ENCODE measurements at regions of chr2 and their contacts with region 1.

Region 1: GRCh38 chr2:42086500-42086953 is 38.7 kb downstream of the PKDCC start:
- DNase-seq: peak; percentile 61 to 78
- H3K4me3 ChIP-seq: no peak overlapping the region
- H3K4me3 Mint-ChIP-seq: no peak overlapping the region
- H3K27ac Mint-ChIP-seq: no peak overlapping the region
- H3K4me1 ChIP-seq: peaks cover 57% of the 10 kb centered on the region
- H3K4me1 Mint-ChIP-seq: peaks cover 66% of the 10 kb centered on the region
- H3K27me3 ChIP-seq: no peaks in the 10 kb centered on the region
- H3K27me3 Mint-ChIP-seq: no peaks in the 10 kb centered on the region
- CTCF ChIP-seq: peak; percentile 74 to 88

Region 2: GRCh38 chr2:41840702-41841551 is 245.6 kb before region 1 on chr2:
- CTCF ChIA-PET with region 1: interaction called, 4 read pairs
- POLR2A ChIA-PET with region 1: no interaction called
- intact Hi-C with region 1: loop called (anchors 1 kb)
- DNase-seq: peak; percentile 98 to 99
- H3K4me3 ChIP-seq: peak overlapping the region; percentile 56
- H3K4me3 Mint-ChIP-seq: peak overlapping the region; percentile 91
- H3K27ac Mint-ChIP-seq: peak overlapping the region; percentile 77
- H3K4me1 ChIP-seq: no peaks in the 10 kb centered on the region
- H3K4me1 Mint-ChIP-seq: no peaks in the 10 kb centered on the region
- H3K27me3 ChIP-seq: no peaks in the 10 kb centered on the region
- H3K27me3 Mint-ChIP-seq: peaks cover 3% of the 10 kb centered on the region
- CTCF ChIP-seq: peak; percentile 98 to 100

Region 3: GRCh38 chr2:41894563-41895333 is 191.8 kb before region 1 on chr2:
- CTCF ChIA-PET with region 1: no interaction called
- POLR2A ChIA-PET with region 1: no interaction called
- intact Hi-C with region 1: loop called (anchors 1 kb)
- DNase-seq: peak; percentile 86 to 88
- H3K4me3 ChIP-seq: no peak overlapping the region
- H3K4me3 Mint-ChIP-seq: no peak overlapping the region
- H3K27ac Mint-ChIP-seq: peak overlapping the region; percentile 56
- H3K4me1 ChIP-seq: peaks cover 39% of the 10 kb centered on the region
- H3K4me1 Mint-ChIP-seq: peaks cover 39% of the 10 kb centered on the region
- H3K27me3 ChIP-seq: no peaks in the 10 kb centered on the region
- H3K27me3 Mint-ChIP-seq: no peaks in the 10 kb centered on the region
- CTCF ChIP-seq: no peak

Region 4: DNA sequence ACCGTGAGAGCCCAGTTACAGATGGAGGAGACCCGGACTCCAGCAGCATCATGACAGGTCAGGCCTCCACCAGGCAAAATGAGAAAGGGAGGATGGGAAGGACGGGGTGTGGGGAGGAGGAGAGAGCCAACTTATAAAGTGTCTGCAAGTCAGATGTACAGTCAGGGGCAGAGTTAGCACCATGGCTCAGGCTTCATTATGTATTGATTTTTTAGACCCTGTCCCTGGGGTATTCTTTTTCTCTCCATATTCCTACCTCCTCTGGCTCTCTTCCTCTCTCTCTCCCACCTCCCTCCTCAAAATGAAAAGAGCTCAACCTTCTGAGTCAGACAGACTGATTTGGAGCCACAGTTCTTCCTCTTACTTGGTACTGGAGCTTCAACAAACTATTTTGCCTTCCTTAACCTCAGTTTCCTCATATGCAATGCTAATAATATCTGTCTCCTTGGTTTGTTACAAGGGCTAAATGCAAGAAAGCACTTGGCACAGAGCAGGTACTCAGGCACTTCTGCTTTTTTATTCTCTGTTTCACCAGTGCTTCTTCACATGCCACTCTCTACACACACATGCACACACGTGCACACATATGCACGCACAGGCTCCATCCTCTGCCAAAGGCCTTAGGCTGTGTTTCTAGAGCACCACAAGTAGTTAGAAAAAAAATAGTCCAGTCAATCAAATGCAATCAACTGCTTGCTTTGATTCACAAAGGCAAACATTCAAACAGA is 131.0 kb before region 1 on chr2:
- CTCF ChIA-PET with region 1: no interaction called
- POLR2A ChIA-PET with region 1: no interaction called
- intact Hi-C with region 1: no loop called
- DNase-seq: no peak
- H3K4me3 ChIP-seq: no peak overlapping the region
- H3K4me3 Mint-ChIP-seq: no peak overlapping the region
- H3K27ac Mint-ChIP-seq: peak overlapping the region; percentile 2
- H3K4me1 ChIP-seq: peaks cover 7% of the 10 kb centered on the region
- H3K4me1 Mint-ChIP-seq: peaks cover 18% of the 10 kb centered on the region
- H3K27me3 ChIP-seq: no peaks in the 10 kb centered on the region
- H3K27me3 Mint-ChIP-seq: no peaks in the 10 kb centered on the region
- CTCF ChIP-seq: no peak

Region 5: DNA sequence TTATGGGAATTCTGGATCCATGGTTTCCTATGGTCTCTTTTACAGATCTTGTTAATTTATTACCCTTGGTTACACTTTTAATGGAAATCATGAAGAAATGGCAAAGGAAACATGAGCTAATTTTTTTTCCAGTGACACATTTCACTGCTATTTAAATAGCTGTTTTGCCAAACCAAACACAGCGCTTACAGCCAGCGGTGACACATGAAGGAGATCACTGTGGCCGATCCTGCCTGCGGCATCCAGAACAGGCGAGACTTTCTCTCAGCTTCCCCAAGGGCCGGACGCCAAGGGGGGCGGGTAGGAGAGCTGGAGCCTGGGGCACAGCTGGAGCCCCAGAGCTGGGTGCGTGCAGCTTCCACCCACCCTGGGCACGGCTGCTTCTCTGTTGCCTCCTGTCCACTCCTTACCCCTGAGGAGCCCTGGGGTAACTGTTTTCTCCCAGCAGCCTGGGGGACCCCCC is 120.1 kb before region 1 on chr2:
- CTCF ChIA-PET with region 1: no interaction called
- POLR2A ChIA-PET with region 1: no interaction called
- intact Hi-C with region 1: no loop called
- DNase-seq: no peak
- H3K4me3 ChIP-seq: no peak overlapping the region
- H3K4me3 Mint-ChIP-seq: no peak overlapping the region
- H3K27ac Mint-ChIP-seq: no peak overlapping the region
- H3K4me1 ChIP-seq: peaks cover 44% of the 10 kb centered on the region
- H3K4me1 Mint-ChIP-seq: peaks cover 45% of the 10 kb centered on the region
- H3K27me3 ChIP-seq: no peaks in the 10 kb centered on the region
- H3K27me3 Mint-ChIP-seq: no peaks in the 10 kb centered on the region
- CTCF ChIP-seq: no peak

Region 6: DNA sequence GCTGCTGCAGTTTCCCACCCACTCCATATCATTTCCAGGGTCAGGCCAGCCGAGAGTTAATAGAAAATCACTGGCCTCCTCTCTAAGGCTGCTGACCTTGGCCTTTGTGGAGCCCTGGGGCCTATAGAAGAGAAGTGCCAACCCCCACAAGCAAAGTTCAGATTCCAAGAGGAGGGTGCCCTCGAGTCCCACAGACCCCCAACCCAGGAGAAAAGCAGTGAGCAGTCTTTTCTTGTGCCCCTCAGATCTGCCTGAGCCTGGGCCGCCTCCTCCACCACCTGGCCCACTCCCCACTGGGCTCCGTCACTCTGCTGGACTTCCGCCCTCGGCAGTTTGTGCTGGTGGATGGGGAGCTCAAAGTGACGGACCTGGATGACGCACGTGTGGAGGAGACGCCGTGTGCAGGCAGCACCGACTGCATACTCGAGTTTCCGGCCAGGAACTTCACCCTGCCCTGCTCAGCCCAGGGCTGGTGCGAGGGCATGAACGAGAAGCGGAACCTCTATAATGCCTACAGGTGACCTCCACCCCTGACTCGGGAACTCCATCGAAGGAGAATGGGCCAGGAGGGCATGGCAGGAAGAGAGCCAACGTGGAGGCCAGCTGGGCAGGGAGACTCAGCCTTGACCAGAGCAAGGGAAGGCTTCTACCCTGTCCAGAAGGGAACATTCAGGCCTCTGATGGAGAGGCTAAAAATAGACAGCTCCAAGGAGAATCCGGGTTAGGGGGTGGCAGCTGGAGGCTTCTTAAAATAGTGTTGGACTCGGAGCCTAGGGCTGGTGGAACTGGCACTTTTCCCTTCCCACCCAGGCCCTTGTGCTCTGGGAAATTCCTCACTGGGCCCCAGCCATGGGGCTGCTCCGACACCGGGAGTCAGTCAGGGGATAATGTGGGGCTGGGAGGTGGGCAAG is 32.5 kb before region 1 on chr2:
- CTCF ChIA-PET with region 1: interaction called, 3 read pairs
- POLR2A ChIA-PET with region 1: interaction called, 8 read pairs
- intact Hi-C with region 1: loop called (anchors 1 kb)
- DNase-seq: no peak
- H3K4me3 ChIP-seq: no peak overlapping the region
- H3K4me3 Mint-ChIP-seq: peak overlapping the region; percentile 69
- H3K27ac Mint-ChIP-seq: peak overlapping the region; percentile 98
- H3K4me1 ChIP-seq: peaks cover 85% of the 10 kb centered on the region
- H3K4me1 Mint-ChIP-seq: peaks cover 60% of the 10 kb centered on the region
- H3K27me3 ChIP-seq: no peaks in the 10 kb centered on the region
- H3K27me3 Mint-ChIP-seq: no peaks in the 10 kb centered on the region
- CTCF ChIP-seq: no peak

Region 7: DNA sequence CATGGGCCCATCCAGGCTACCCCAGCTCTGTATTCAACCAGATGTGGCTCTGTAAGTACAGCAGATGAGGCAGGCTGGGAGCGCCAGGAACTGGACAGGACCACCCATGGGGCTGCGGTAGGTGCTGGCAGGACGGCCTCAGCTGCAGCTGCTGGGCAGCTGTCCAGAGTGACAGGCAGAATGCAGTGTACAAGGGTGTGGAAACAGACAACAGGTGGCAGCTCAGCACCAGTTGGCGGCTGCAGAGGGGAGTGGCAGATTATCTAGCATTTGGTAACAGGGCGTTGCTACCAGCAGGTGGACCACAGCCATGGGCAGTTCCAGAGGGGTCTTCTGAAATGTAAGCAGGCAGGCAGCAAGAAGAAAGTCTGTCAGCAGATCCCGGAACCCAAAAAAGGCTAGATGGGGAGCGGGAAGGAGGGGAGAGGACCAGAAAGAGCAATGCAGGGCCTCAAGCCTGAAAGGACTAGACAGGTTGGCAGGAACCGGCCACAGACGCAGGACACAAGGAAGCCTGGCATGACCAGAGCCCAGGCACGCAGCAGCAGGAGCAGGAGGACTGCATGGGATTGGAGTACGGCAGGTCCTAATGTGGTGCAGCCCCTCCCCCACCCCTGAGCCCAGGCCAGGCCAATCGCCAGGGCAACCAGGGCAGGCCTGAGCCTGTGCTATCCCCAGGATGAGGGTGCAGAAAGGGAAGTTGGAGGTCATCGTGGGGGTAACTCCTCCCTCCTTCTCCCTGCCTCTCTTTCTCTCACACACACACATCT is 14.0 kb before region 1 on chr2:
- CTCF ChIA-PET with region 1: interaction called, 5 read pairs
- POLR2A ChIA-PET with region 1: interaction called, 3 read pairs
- intact Hi-C with region 1: loop called (anchors 1 kb)
- DNase-seq: no peak
- H3K4me3 ChIP-seq: no peak overlapping the region
- H3K4me3 Mint-ChIP-seq: no peak overlapping the region
- H3K27ac Mint-ChIP-seq: peak overlapping the region; percentile 88
- H3K4me1 ChIP-seq: peaks cover 45% of the 10 kb centered on the region
- H3K4me1 Mint-ChIP-seq: peaks cover 57% of the 10 kb centered on the region
- H3K27me3 ChIP-seq: no peaks in the 10 kb centered on the region
- H3K27me3 Mint-ChIP-seq: no peaks in the 10 kb centered on the region
- CTCF ChIP-seq: no peak